ENCODE measurements at regions of chr12 and their contacts with region 1.

Region 1: GRCh38 chr12:6944381-6945186 is 762 bp downstream of the C12orf57 start:
- DNase-seq: peak; percentile 83 to 94
- ATAC-seq: peak; percentile 51 to 73 (median 53)
- H3K4me3 ChIP-seq: peak overlapping the region; percentile 91
- H3K4me3 Mint-ChIP-seq: peak overlapping the region; percentile 82
- H3K27ac ChIP-seq: peak overlapping the region; percentile 99
- H3K27ac Mint-ChIP-seq: peak overlapping the region; percentile 98 to 99
- H3K4me1 ChIP-seq: peaks cover 66% of the 10 kb centered on the region
- H3K4me1 Mint-ChIP-seq: peaks cover 61 to 69% of the 10 kb centered on the region in 2 donors
- H3K27me3 ChIP-seq: no peaks in the 10 kb centered on the region
- H3K27me3 Mint-ChIP-seq: no peaks in the 10 kb centered on the region
- CTCF ChIP-seq: peak; percentile 90

Region 2: GRCh38 chr12:6959058-6959804 is 14.6 kb after region 1 on chr12:
- intact Hi-C with region 1: loop called (anchors 1 kb)
- DNase-seq: peak; percentile 76 to 91
- ATAC-seq: peak; percentile 61 to 79 (median 66)
- H3K4me3 ChIP-seq: peak overlapping the region; percentile 22
- H3K4me3 Mint-ChIP-seq: peak overlapping the region; percentile 92
- H3K27ac ChIP-seq: peak overlapping the region; percentile 96
- H3K27ac Mint-ChIP-seq: peak overlapping the region; percentile 98 to 99
- H3K4me1 ChIP-seq: peaks cover 89% of the 10 kb centered on the region
- H3K4me1 Mint-ChIP-seq: peaks cover 66 to 76% of the 10 kb centered on the region in 2 donors
- H3K27me3 ChIP-seq: no peaks in the 10 kb centered on the region
- H3K27me3 Mint-ChIP-seq: no peaks in the 10 kb centered on the region
- CTCF ChIP-seq: no peak

Region 3: GRCh38 chr12:8057839-8058238 is 1113.3 kb after region 1 on chr12:
- intact Hi-C with region 1: no loop called
- DNase-seq: no peak
- ATAC-seq: no peak
- H3K4me3 ChIP-seq: no peak overlapping the region
- H3K4me3 Mint-ChIP-seq: no peak overlapping the region
- H3K27ac ChIP-seq: no peak overlapping the region
- H3K27ac Mint-ChIP-seq: peak overlapping the region; percentile 22 to 65
- H3K4me1 ChIP-seq: no peaks in the 10 kb centered on the region
- H3K4me1 Mint-ChIP-seq: peaks cover 0 to 5% of the 10 kb centered on the region in 2 donors
- H3K27me3 ChIP-seq: no peaks in the 10 kb centered on the region
- H3K27me3 Mint-ChIP-seq: no peaks in the 10 kb centered on the region
- CTCF ChIP-seq: no peak

Measured in natural killer cell (primary cell).